HCT116 (cell line): ENCODE measurements at regions of chr11 and their contacts with region 1.

Region 1: GRCh38 chr11:65497141-65498041 is 1.5 kb upstream of the MALAT1 start:
- DNase-seq: peak; percentile 96
- ATAC-seq: peak; percentile 75
- H3K4me3 ChIP-seq: peak overlapping the region; percentile 57 to 79
- H3K27ac ChIP-seq: peak overlapping the region; percentile 98
- H3K4me1 ChIP-seq: peaks cover 49 to 86% of the 10 kb centered on the region in 2 experiments
- H3K27me3 ChIP-seq: no peaks in the 10 kb centered on the region
- CTCF ChIP-seq: no peak
- POLR2A ChIP-seq: no peak
- RAD21 ChIP-seq: no peak

Region 2: GRCh38 chr11:65243773-65244172 is 253.6 kb before region 1 on chr11:
- CTCF ChIA-PET with region 1: no interaction called
- POLR2A ChIA-PET with region 1: no interaction called
- RAD21 ChIA-PET with region 1: no interaction called
- intact Hi-C with region 1: no loop called
- DNase-seq: no peak
- ATAC-seq: no peak
- H3K4me3 ChIP-seq: no peak overlapping the region
- H3K27ac ChIP-seq: no peak overlapping the region
- H3K4me1 ChIP-seq: no peaks in the 10 kb centered on the region
- H3K27me3 ChIP-seq: no peaks in the 10 kb centered on the region
- CTCF ChIP-seq: no peak
- POLR2A ChIP-seq: no peak
- RAD21 ChIP-seq: no peak

Region 3: DNA sequence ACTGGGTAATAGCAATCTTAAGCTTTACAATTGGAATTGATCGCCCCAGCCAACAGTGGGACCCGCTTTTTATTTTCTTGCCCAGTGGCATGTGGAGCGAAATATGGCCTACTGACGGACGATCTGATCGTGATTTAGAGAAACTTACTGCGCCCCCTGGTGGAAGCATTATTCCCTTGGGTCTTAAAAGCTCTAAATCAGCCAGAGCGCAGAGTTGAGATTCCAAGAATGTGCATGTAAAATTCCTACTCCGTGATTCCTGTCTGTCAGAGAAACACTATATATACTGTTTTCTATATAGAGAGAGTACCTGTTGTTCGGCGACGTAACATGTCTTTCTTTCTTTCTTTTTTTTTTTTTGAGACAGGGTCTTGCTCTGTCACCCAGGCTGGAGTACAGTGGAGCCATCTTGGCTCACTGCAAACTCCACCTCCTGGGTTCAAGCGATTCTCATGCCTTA is 167.4 kb before region 1 on chr11:
- CTCF ChIA-PET with region 1: no interaction called
- POLR2A ChIA-PET with region 1: interaction called, 16 read pairs
- RAD21 ChIA-PET with region 1: no interaction called
- intact Hi-C with region 1: no loop called
- DNase-seq: peak; percentile 93
- ATAC-seq: peak; percentile 57
- H3K4me3 ChIP-seq: 0 out of 4 replicates have a peak overlapping the region, but pooled peaks of 1 of the 2 experiments have one; percentile 6
- H3K27ac ChIP-seq: no peak overlapping the region
- H3K4me1 ChIP-seq: peaks cover 9 to 23% of the 10 kb centered on the region in 2 experiments
- H3K27me3 ChIP-seq: no peaks in the 10 kb centered on the region
- CTCF ChIP-seq: peak; percentile 76 to 89 (median 86)
- POLR2A ChIP-seq: peak; percentile 15
- RAD21 ChIP-seq: peak; percentile 80

Region 4: DNA sequence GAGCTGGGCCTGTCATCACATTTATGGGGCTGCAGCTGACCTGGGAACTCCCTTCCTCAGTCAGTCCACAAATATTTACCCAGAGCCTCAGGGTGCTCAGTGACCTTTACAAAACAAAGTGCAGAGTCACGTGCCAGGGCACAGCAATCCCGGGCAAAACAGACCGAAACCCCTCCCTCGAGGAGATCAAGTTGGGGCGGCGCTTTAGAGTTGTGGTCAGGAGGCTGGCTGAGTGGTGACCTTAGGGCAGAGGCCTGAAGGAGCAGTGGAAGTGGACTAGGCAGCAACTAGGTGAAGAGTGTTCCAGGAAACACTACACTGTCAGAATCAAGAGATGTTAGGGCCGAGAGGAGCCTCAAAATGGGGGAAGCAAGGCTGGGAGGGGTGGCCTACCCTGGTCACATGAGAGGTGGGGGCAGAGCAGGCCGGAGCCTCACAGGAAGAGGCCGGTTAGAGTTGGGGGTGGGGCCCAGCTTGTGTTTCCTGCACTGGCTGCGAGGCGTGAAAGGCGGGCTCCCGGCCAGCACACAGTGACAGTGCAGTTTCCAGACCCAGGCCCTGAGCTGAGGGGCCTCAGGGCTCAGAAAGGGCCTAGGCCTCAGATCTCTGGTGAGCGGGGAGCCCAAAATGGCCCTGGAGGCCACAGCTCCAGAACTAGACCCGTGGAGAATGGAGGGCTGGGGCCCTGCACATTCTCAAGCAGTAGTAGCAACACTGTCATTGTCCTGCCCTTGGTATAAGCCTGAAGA is 78.5 kb before region 1 on chr11:
- CTCF ChIA-PET with region 1: interaction called, 5 read pairs
- POLR2A ChIA-PET with region 1: interaction called, 910 read pairs
- RAD21 ChIA-PET with region 1: interaction called, 3 read pairs
- intact Hi-C with region 1: loop called (anchors 2 kb)
- DNase-seq: peak; percentile 84
- ATAC-seq: peak; percentile 59
- H3K4me3 ChIP-seq: peak overlapping the region; percentile 40 to 56
- H3K27ac ChIP-seq: peak overlapping the region; percentile 100
- H3K4me1 ChIP-seq: peaks cover 53 to 84% of the 10 kb centered on the region in 2 experiments
- H3K27me3 ChIP-seq: no peaks in the 10 kb centered on the region
- CTCF ChIP-seq: no peak
- POLR2A ChIP-seq: peak; percentile 87
- RAD21 ChIP-seq: no peak

Region 5: DNA sequence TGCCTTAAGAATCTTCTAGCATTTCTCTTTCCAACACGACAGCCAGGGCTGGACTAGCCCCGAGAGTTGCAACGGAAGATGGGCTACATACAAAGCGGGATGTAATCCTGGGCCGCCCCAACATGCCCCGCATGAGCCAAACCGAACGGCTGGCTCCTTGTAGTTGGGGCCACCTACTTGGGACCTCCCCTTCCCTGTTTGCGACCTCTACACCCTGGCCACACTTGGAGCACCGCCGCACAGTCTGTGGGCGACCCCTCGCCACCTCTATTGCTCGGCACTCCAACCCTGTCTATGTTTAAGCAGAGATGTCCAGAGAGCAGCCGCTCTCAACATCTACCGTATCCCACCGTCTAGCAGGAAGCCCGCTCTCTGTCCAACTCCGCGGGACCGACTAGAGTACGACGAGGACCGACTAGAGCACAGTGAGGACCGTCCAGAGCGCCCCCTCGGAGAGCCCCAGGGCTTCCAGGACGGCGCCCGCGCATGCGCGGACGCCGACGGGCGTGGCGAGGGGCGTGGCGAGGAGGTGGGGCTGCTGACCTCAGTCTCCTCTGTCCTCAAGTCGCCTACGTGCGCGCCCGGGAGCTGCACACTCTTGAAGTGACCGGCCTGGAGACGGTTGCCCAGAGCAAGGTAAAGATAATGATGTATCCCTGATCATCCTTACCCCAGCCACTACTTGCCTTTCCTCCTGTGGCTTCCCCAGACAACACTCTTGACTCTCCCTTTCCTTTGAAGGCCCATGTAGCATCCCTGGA is 42.5 kb before region 1 on chr11:
- CTCF ChIA-PET with region 1: no interaction called
- POLR2A ChIA-PET with region 1: interaction called, 33 read pairs
- RAD21 ChIA-PET with region 1: no interaction called
- intact Hi-C with region 1: no loop called
- DNase-seq: peak; percentile 85
- ATAC-seq: peak; percentile 85
- H3K4me3 ChIP-seq: peak overlapping the region; percentile 73 to 76
- H3K27ac ChIP-seq: peak overlapping the region; percentile 94
- H3K4me1 ChIP-seq: peaks cover 40 to 51% of the 10 kb centered on the region in 2 experiments
- H3K27me3 ChIP-seq: no peaks in the 10 kb centered on the region
- CTCF ChIP-seq: 0 out of 6 replicates have a peak, but pooled peaks of 1 of the 3 experiments have one; percentile 17
- POLR2A ChIP-seq: peak; percentile 94
- RAD21 ChIP-seq: no peak

Region 6: DNA sequence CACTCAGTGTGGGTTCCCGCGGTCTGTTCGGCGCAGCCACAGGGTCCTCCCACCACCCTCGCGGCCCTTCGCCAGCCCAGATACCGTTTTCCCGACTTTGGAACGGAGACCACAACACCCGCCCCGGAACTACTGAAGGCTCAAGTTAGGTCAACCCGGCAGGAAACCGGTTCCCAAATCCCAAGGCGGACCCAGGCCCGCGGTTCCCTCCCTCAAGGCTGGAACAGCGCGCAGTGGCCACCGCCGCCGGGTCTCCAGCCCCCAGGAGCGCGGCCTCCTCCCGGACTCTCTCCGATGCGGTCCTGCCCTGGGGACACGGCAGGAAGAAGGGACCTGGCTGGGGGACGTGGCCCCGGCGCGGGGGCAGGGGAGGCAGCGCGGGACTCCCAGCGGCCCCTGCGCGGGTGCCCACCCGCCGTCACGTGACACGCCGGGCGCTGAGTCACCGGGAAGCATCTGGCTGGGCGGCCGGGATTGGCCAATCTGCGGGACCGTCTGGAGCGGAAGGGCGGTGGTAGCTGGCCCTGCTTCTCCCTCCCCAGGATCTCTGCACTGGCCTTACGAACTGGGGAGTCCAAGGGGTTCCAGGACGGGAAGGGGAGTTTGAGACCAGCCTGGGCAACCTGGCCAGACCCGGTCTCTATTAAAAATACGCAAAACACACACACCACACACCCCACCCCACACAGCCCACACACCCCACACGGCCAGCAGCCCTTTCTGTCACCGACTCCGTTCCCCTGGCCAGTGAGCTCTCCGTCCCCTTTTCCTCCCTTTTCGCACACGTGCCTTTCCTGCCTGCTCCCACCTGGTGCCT is 20.0 kb before region 1 on chr11:
- CTCF ChIA-PET with region 1: interaction called, 12 read pairs
- POLR2A ChIA-PET with region 1: interaction called, 1,499 read pairs
- RAD21 ChIA-PET with region 1: interaction called, 13 to 27 read pairs
- intact Hi-C with region 1: loop called (anchors 2 kb)
- DNase-seq: no peak
- ATAC-seq: peak; percentile 78
- H3K4me3 ChIP-seq: peak overlapping the region; percentile 86
- H3K27ac ChIP-seq: peak overlapping the region; percentile 97
- H3K4me1 ChIP-seq: peaks cover 74 to 89% of the 10 kb centered on the region in 2 experiments
- H3K27me3 ChIP-seq: no peaks in the 10 kb centered on the region
- CTCF ChIP-seq: no peak
- POLR2A ChIP-seq: peak; percentile 53
- RAD21 ChIP-seq: no peak